Tibial artery (tissue), 4 donors: ENCODE measurements at regions of chr15 and their contacts with region 1.

Region 1: GRCh38 chr15:27418726-27419125 is 447.7 kb downstream of the GABRG3 start:
- DNase-seq: no peak
- H3K4me3 ChIP-seq: no peak overlapping the region
- H3K27ac ChIP-seq: no peak overlapping the region
- H3K4me1 ChIP-seq: no peaks in the 10 kb centered on the region
- H3K27me3 ChIP-seq: no peaks in the 10 kb centered on the region
- CTCF ChIP-seq: no peak

Region 2: GRCh38 chr15:27241943-27242342 is 176.8 kb before region 1 on chr15:
- intact Hi-C with region 1: no loop called
- DNase-seq: no peak
- H3K4me3 ChIP-seq: no peak overlapping the region
- H3K27ac ChIP-seq: no peak overlapping the region
- H3K4me1 ChIP-seq: no peaks in the 10 kb centered on the region
- H3K27me3 ChIP-seq: no peaks in the 10 kb centered on the region
- CTCF ChIP-seq: no peak

Region 3: DNA sequence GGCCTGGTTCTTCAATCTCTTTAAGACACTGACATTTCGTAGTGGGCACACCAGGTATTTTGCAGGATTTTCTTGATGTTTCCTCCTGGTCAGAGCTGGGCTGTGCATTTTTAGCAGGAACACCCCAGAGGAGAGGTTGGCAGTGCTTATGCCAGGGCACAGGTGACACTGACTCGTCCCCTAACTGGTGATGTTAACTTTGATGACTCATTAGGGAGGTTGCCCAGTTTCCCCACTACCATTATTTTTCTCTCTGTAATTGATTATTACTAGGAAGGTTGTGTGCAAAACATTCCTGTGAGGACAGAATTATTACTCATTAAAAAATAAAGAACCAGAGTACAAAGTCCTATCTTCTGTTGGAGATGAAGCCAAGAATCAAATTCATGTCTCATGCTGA is 53.3 kb before region 1 on chr15:
- intact Hi-C with region 1: loop called (anchors 5 kb)
- DNase-seq: no peak
- H3K4me3 ChIP-seq: no peak overlapping the region
- H3K27ac ChIP-seq: no peak overlapping the region
- H3K4me1 ChIP-seq: no peaks in the 10 kb centered on the region
- H3K27me3 ChIP-seq: no peaks in the 10 kb centered on the region
- CTCF ChIP-seq: no peak

Region 4: DNA sequence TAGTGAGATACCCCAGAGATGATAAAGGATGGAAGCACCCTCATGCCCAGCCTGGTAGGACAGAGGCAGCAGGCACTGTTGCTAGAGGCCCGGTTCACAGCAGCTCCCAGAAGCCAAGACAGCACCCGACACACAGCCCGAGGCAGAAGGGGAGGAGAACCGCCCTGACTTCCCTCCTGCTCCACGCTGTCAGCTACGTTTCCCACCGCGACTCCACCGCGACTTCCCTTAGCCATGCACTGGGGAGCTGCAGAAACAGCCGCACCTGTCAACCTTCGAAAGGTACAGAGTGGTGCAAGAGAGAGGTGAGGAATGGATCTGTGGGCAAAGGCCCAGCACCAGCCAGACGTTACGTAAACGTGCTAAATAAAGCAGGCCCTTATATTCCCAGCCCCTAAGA is 81.5 kb after region 1 on chr15:
- intact Hi-C with region 1: no loop called
- DNase-seq: no peak
- H3K4me3 ChIP-seq: no peak overlapping the region
- H3K27ac ChIP-seq: no peak overlapping the region
- H3K4me1 ChIP-seq: no peaks in the 10 kb centered on the region
- H3K27me3 ChIP-seq: no peaks in the 10 kb centered on the region
- CTCF ChIP-seq: no peak

Region 5: DNA sequence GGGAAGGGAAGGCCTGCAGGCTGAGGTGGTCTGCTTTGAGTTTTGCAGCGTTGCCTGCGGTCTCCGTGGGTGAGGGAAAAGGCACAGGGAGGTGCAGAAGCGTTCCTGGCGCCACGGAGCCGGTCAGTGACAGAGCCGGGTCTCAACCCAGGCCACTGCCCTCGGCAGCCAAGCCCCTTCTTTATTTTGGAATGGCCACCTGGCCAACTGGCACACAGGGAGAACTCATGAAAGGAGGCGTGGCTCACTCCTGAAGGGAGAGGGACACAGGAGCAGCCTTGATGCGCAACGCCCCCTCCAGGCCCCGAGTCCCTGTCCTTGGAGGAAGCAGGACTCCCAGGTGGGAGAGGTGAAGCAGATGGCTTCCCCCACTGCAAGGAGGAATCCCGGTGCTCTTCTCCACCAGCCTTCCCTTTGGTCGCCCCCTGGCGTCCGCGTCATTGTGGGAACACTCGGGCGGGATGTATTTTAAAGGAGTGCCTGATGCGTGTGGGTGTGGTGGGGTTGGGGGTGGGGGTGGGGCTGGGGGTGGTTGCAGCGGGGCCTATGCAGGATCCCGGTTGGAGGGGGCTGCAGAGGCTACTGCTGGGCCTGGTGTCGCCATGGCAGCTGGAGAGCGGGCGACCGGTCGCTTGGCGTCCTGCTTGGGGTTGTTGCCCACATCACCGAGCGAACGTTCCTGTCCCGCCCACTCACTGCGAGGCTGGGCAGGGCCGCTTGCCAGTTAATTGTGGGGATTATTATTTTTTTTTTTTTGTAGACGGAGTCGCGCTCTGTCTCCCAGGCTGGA is 1499.6 kb after region 1 on chr15:
- intact Hi-C with region 1: loop called (anchors 10 kb)
- DNase-seq: peak in 1 of 2 donors; percentile 55
- H3K4me3 ChIP-seq: no peak overlapping the region
- H3K27ac ChIP-seq: no peak overlapping the region
- H3K4me1 ChIP-seq: no peaks in the 10 kb centered on the region
- H3K27me3 ChIP-seq: peaks cover 0 to 21% of the 10 kb centered on the region in 2 donors
- CTCF ChIP-seq: no peak